Aorta (tissue), 5 donors: ENCODE measurements at regions of chr15 and their contacts with region 1.

Region 1: GRCh38 chr15:75625542-75626347 is at the start of gene SNUPN:
- DNase-seq: peak; percentile 96 to 97
- ATAC-seq: peak; percentile 95
- H3K4me3 ChIP-seq: peak within 1 kb of the TSS; percentile 68 to 75
- H3K27ac ChIP-seq: peak within 1 kb of the TSS; percentile 86 to 96
- H3K4me1 ChIP-seq: peaks cover 0 to 2% of the 10 kb centered on the region in 2 donors
- H3K27me3 ChIP-seq: no peaks in the 10 kb centered on the region
- total RNA-seq, gene SNUPN: 16.3 to 20.9 TPM

Region 2: GRCh38 chr15:75367913-75368688 is 257.6 kb before region 1 on chr15 and contains the start of gene MAN2C1:
- intact Hi-C with region 1: loop called (anchors 2 to 10 kb)
- DNase-seq: peak; percentile 96 to 98
- ATAC-seq: peak; percentile 96
- H3K4me3 ChIP-seq: peak within 1 kb of the TSS; percentile 59 to 70
- H3K27ac ChIP-seq: peak within 1 kb of the TSS; percentile 1 to 90
- H3K4me1 ChIP-seq: no peaks in the 10 kb centered on the region
- H3K27me3 ChIP-seq: no peaks in the 10 kb centered on the region
- total RNA-seq, gene MAN2C1: 198 to 257 TPM

Region 3: DNA sequence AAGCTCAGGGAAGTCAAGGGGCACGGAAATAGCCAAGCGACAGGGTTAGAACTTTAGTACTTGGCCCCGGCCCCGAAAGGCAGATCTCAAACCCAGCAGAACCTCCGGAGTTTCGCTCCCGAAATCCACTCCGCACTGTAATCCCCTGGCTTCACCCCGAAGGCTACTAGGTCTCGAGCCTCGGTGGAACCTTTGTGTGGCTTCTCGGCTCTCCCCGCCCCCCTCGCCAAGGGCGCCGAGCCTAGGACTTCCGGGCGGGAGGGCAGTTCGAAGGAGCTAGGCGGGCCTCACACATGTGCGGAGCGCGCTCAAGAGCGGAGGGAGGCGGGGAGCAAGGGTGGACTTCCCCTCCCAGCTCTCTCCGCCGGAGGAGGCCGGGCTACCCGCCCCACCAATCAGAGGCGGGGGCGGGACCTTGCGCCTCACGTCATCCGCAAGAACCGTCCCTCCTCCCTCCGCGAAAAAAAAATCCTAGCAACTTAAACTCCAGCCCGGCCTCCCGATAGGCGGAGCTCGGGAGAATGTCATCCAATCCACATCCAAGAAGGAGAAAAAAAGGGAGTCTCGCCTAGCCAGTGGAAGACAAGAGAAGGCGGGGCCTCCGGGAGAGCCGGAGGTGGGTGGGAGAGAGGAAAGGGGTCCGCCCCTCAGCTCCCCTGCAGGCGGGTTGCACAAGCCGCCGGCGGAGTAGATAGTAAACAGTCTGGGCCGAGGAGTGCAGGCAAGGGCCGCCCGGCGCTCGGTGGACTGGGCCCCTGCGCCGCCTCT is 171.9 kb before region 1 on chr15:
- intact Hi-C with region 1: loop called in 1 of 2 experiments (anchors 5 kb)
- DNase-seq: peak; percentile 98 to 99
- ATAC-seq: peak; percentile 84
- H3K4me3 ChIP-seq: peak overlapping the region; percentile 93 to 95
- H3K27ac ChIP-seq: peak overlapping the region; percentile 84 to 99
- H3K4me1 ChIP-seq: no peaks in the 10 kb centered on the region
- H3K27me3 ChIP-seq: no peaks in the 10 kb centered on the region

Region 4: DNA sequence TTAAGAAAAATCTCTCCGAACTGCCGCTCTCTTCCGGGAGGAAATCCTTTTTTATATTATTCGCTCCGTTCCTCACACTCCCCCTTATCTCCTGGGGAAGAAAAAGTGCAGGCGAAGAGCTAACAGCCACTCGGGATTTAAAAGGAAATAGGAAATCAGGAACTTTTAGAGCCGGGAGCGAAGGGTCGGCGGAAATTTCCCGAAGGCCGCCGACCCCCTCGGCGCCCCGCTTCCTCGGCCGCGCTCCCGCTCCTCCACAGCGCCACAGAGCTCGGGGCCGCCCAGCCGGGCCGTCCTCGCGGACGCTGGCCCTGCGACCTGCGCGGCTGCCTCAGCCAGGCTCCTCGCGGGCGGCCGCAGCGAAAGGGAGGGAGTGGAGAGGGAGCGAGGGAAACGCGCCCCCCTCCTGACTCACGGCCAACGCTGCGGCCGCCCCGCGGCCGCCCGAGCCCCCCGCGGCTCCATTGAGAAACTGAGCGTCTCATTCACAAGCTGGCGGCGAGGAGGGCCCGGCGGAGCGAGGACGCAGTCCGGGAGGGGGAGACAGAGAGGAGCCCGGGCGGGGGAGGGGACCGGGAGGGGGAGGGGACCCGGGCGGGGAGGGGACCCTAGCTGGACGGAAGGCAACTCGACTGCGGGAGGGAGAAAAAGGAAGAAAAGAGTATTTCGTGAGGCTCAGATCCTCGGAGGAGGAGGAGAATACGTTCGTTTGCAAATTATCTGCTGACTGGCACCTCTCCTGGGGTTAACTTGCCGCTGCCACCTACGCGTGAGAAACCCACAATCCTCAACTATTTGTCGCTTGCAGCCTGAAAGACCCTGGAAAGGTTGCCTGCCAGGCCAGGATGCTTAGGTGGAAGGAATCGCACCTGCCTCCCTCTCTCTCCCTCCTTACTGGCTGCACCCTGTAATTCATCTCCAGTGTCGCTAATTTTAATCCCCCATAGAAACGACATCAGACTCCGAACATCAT is 46.5 kb before region 1 on chr15 and contains the start of gene PTPN9:
- intact Hi-C with region 1: loop called in 1 of 2 experiments (anchors 5 kb)
- DNase-seq: peak; percentile 86 to 93
- ATAC-seq: peak; percentile 90
- H3K4me3 ChIP-seq: peak within 1 kb of the TSS; percentile 38 to 99
- H3K27ac ChIP-seq: peak within 1 kb of the TSS; percentile 50 to 70
- H3K4me1 ChIP-seq: no peaks in the 10 kb centered on the region
- H3K27me3 ChIP-seq: no peaks in the 10 kb centered on the region
- total RNA-seq, gene PTPN9: 25.0 to 37.9 TPM